Natural killer cell (primary cell): ENCODE measurements at regions of chr1 and their contacts with region 1.

Region 1: DNA sequence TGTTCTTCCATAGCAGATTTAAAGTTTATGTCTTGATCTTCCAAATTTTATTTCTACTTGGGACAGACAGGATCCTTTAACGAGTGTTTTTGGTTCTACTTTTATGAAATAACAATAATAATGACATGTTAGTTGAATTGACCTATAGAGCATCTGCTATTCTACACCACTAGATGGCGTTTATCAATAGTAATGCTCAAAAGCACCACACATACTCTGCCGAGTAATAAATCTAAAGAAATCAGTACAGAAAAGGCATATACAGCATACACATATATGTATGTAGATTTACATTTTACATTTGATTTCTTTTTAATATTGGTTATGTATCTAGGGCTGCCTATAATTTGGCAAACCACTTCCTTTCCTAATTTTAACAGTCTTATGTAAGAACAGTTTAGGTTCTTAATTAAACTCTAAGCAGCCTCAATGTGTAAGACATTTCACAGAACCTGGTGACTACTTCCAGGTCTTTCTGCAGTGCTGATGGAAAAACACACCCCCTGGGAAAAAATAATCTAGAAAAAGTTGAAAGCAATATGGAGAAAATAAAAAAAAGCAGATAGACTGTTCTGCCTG is 5.9 kb upstream of the SIPA1L2 start:
- DNase-seq: peak in 1 of 2 donors; percentile 67
- ATAC-seq: peak; percentile 80 to 86 (median 83)
- H3K4me3 ChIP-seq: no peak overlapping the region
- H3K4me3 Mint-ChIP-seq: no peak overlapping the region
- H3K27ac ChIP-seq: no peak overlapping the region
- H3K27ac Mint-ChIP-seq: no peak overlapping the region
- H3K4me1 ChIP-seq: peaks cover 3% of the 10 kb centered on the region
- H3K4me1 Mint-ChIP-seq: peaks cover 2% of the 10 kb centered on the region in 2 donors
- H3K27me3 ChIP-seq: peaks cover 2% of the 10 kb centered on the region
- H3K27me3 Mint-ChIP-seq: peaks cover 20 to 21% of the 10 kb centered on the region in 2 donors
- CTCF ChIP-seq: peak; percentile 80

Region 2: DNA sequence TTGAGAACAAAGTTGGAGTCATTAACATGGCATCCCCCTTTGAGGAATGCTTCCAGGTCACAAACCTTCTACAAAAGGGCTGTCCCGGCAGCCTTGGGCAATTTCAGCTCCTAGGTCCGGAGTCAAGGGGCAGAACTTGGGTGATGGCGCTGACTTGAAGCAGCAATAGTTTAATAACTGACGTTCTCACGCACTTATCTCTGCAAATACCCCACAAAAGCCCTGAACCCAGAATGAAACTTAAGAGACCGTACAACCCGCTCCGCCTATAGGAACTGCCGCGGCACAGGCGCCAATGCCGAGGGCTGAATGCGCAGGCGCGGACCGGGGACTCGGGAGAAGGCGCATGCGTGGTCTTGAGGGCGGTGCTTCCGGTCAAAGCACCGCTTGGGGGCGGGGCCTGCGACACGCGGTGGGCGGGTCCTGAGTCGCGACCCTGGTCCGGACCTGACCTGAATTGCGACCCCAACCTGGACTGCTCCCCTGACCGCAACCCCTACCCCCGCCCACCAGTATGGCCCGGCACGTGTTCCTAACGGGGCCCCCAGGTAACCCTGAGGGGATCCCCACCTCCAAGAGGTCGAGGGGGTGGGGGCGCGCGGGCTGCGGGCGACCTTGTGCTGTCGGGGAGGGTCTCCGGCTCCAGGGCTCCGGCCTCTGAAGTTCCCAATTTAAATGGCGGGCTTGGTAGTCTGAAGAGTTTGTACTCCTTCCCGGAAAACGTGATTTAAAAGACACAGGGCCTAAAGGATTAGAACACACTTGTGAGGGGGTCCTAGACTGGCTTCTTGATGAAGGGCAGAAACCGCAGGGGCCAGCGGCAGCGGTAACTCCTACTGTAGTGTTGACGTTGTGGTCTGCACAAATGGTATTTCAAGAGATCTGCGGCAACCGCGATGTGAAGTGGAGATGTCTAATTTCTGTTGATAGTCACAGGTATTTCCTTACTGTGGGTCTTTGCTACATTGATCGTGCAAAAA is 314.6 kb after region 1 on chr1 and contains the start of gene NTPCR:
- intact Hi-C with region 1: loop called (anchors 2 kb)
- DNase-seq: peak; percentile 94 to 97
- ATAC-seq: peak; percentile 86 to 88 (median 87)
- H3K4me3 ChIP-seq: peak within 1 kb of the TSS; percentile 68
- H3K4me3 Mint-ChIP-seq: peak within 1 kb of the TSS; percentile 93
- H3K27ac ChIP-seq: peak within 1 kb of the TSS; percentile 60
- H3K27ac Mint-ChIP-seq: peak within 1 kb of the TSS; percentile 90 to 94
- H3K4me1 ChIP-seq: peaks cover 19% of the 10 kb centered on the region
- H3K4me1 Mint-ChIP-seq: peaks cover 39 to 47% of the 10 kb centered on the region in 2 donors
- H3K27me3 ChIP-seq: no peaks in the 10 kb centered on the region
- H3K27me3 Mint-ChIP-seq: no peaks in the 10 kb centered on the region
- CTCF ChIP-seq: no peak
- total RNA-seq, gene NTPCR: 12.9 to 25.7 (median 17.4) TPM

Region 3: GRCh38 chr1:233240829-233241682 is 605.2 kb after region 1 on chr1:
- intact Hi-C with region 1: loop called (anchors 5 kb)
- DNase-seq: peak in 1 of 2 donors; percentile 46
- ATAC-seq: peak in 2 of 3 donors; percentile 68 to 69
- H3K4me3 ChIP-seq: no peak overlapping the region
- H3K4me3 Mint-ChIP-seq: no peak overlapping the region
- H3K27ac ChIP-seq: no peak overlapping the region
- H3K27ac Mint-ChIP-seq: no peak overlapping the region
- H3K4me1 ChIP-seq: no peaks in the 10 kb centered on the region
- H3K4me1 Mint-ChIP-seq: peaks cover 0 to 11% of the 10 kb centered on the region in 2 donors
- H3K27me3 ChIP-seq: no peaks in the 10 kb centered on the region
- H3K27me3 Mint-ChIP-seq: no peaks in the 10 kb centered on the region
- CTCF ChIP-seq: no peak